A673 (cell line): ENCODE measurements at regions of chr4 and their contacts with region 1.

Region 1: GRCh38 chr4:133130171-133130570 is 18.9 kb upstream of the PCDH10 start:
- DNase-seq: no peak
- H3K4me3 ChIP-seq: no peak overlapping the region
- H3K27ac ChIP-seq: no peak overlapping the region
- H3K4me1 ChIP-seq: no peaks in the 10 kb centered on the region
- H3K27me3 ChIP-seq: no peaks in the 10 kb centered on the region
- CTCF ChIP-seq: no peak

Region 2: GRCh38 chr4:132839070-132839469 is 291.1 kb before region 1 on chr4:
- CTCF ChIA-PET with region 1: no interaction called
- POLR2A ChIA-PET with region 1: no interaction called
- intact Hi-C with region 1: loop called (anchors 10 kb)
- DNase-seq: no peak
- H3K4me3 ChIP-seq: no peak overlapping the region
- H3K27ac ChIP-seq: no peak overlapping the region
- H3K4me1 ChIP-seq: no peaks in the 10 kb centered on the region
- H3K27me3 ChIP-seq: no peaks in the 10 kb centered on the region
- CTCF ChIP-seq: no peak

Region 3: GRCh38 chr4:134070174-134070797 is 940.1 kb after region 1 on chr4:
- CTCF ChIA-PET with region 1: no interaction called
- POLR2A ChIA-PET with region 1: no interaction called
- intact Hi-C with region 1: no loop called
- DNase-seq: no peak
- H3K4me3 ChIP-seq: no peak overlapping the region
- H3K27ac ChIP-seq: no peak overlapping the region
- H3K4me1 ChIP-seq: no peaks in the 10 kb centered on the region
- H3K27me3 ChIP-seq: no peaks in the 10 kb centered on the region
- CTCF ChIP-seq: no peak